Head of caudate nucleus (tissue), 42 donors: ENCODE measurements at regions of chr18 and their contacts with region 1.

Region 1: GRCh38 chr18:61209801-61210200 is 123.4 kb upstream of the CDH20 start:
- DNase-seq: no peak

Region 2: GRCh38 chr18:61261870-61262269 is 52.1 kb after region 1 on chr18:
- intact Hi-C with region 1: loop called (anchors 10 kb)
- DNase-seq: no peak